Vagina (tissue), 2 donors: ENCODE measurements at regions of chr10 and their contacts with region 1.

Region 1: DNA sequence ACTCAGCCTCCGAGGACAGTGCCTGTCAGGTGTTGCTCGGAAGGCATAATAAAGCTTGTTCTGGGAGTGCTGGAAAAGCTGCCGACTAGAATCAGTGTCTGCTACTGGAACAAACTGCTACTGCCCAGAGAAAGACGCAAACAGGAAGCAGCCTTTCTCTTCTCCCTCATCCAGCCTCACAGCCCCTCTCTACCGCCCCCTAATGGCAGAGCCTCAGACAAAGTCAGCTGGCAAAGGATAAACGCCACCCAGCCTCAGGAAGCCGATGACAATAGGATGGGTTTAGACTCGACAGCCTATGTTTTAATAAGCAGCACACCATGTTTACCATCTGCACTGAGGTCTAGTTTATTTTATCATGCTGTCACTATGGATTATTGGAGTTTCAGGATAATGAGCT is 169.5 kb upstream of the LYZL1 start:
- DNase-seq: no peak
- H3K4me3 ChIP-seq: no peak overlapping the region
- H3K27ac ChIP-seq: no peak overlapping the region
- H3K4me1 ChIP-seq: no peaks in the 10 kb centered on the region
- H3K27me3 ChIP-seq: no peaks in the 10 kb centered on the region
- CTCF ChIP-seq: no peak
- POLR2A ChIP-seq: no peak

Region 2: DNA sequence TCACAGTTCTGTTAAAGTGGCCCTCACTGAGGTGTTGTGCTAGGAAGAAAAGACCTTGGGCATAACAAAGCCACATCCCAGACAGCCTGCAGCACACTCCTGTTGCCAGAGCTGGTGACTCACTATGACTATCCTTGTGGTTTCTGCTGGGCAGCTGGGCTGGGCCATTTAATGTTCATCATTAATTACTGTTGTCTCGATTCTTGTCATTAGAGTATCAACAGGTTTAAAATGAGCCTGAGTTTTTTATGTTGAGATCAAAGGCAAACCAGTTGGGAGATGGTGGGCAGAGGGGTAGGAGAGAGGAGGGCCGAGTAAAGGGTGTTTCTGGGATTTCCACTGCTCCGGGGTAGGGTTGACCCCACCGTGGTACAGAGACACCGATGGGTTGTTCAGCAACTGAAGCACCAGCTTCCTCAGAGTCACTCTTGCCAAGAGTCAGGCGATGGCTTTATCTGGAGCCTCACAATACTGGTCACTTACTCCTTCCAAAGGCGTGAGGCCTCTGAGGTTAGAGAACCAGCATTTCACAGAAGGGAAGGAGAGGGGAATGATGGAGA is 40.8 kb after region 1 on chr10:
- intact Hi-C with region 1: no loop called
- DNase-seq: no peak
- H3K4me3 ChIP-seq: no peak overlapping the region
- H3K27ac ChIP-seq: no peak overlapping the region
- H3K4me1 ChIP-seq: no peaks in the 10 kb centered on the region
- H3K27me3 ChIP-seq: no peaks in the 10 kb centered on the region
- CTCF ChIP-seq: no peak
- POLR2A ChIP-seq: no peak

Region 3: DNA sequence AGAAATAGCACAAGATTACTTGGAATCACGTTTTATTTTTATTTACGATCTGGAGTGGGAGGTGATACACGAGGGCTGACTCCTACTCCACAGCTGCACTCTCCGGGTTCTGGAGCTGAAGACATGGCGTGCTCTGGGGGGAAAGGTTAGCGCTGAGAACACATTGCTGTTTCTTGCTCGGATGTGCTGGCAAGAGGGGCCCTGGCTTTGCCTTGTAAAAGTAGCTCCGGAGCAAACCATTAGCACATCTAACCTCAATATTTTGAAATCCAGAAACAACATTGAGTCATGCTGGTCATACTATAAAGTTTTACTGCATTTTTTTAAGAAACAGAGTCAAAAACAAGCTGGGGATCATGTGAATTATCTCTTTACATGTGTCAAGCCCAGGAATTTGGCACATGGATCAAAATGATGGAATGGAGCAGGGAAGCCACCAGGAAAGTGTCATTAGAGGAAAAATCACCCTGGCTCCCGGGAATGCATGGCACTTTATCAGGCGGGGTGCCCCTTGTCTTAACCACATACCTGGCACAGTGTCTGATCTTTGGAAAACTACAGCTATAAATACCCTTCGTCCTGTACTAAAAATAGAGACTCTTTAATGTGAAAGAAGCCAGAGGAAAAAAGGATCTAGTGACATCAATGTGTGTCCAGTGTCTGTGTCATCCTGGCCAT is 137.9 kb after region 1 on chr10:
- intact Hi-C with region 1: loop called (anchors 5 kb)
- DNase-seq: peak in 1 of 2 donors; percentile 99
- H3K4me3 ChIP-seq: no peak overlapping the region
- H3K27ac ChIP-seq: peak overlapping the region; percentile 68
- H3K4me1 ChIP-seq: peaks cover 40% of the 10 kb centered on the region
- H3K27me3 ChIP-seq: no peaks in the 10 kb centered on the region
- CTCF ChIP-seq: no peak
- POLR2A ChIP-seq: no peak